ENCODE measurements at regions of chr6 and their contacts with region 1.

Region 1: GRCh38 chr6:165884813-165885765 is 222.0 kb upstream of the PDE10A start:
- DNase-seq: peak; percentile 18 to 25
- ATAC-seq: peak; percentile 39 to 41
- H3K4me3 ChIP-seq: no peak overlapping the region
- H3K27ac ChIP-seq: no peak overlapping the region
- H3K4me1 ChIP-seq: no peaks in the 10 kb centered on the region
- H3K27me3 ChIP-seq: no peaks in the 10 kb centered on the region
- CTCF ChIP-seq: peak; percentile 22 to 76 (median 64)
- POLR2A ChIP-seq: no peak

Region 2: GRCh38 chr6:165448210-165448609 is 436.9 kb before region 1 on chr6:
- in situ Hi-C with region 1: no loop called
- intact Hi-C with region 1: no loop called
- DNase-seq: no peak
- ATAC-seq: no peak
- H3K4me3 ChIP-seq: no peak overlapping the region
- H3K27ac ChIP-seq: no peak overlapping the region
- H3K4me1 ChIP-seq: no peaks in the 10 kb centered on the region
- H3K27me3 ChIP-seq: no peaks in the 10 kb centered on the region
- CTCF ChIP-seq: no peak
- POLR2A ChIP-seq: no peak

Region 3: GRCh38 chr6:165913676-165914571 is 28.8 kb after region 1 on chr6:
- in situ Hi-C with region 1: no loop called
- intact Hi-C with region 1: no loop called
- DNase-seq: no peak
- ATAC-seq: no peak
- H3K4me3 ChIP-seq: no peak overlapping the region
- H3K27ac ChIP-seq: no peak overlapping the region
- H3K4me1 ChIP-seq: no peaks in the 10 kb centered on the region
- H3K27me3 ChIP-seq: no peaks in the 10 kb centered on the region
- CTCF ChIP-seq: no peak
- POLR2A ChIP-seq: no peak

Region 4: DNA sequence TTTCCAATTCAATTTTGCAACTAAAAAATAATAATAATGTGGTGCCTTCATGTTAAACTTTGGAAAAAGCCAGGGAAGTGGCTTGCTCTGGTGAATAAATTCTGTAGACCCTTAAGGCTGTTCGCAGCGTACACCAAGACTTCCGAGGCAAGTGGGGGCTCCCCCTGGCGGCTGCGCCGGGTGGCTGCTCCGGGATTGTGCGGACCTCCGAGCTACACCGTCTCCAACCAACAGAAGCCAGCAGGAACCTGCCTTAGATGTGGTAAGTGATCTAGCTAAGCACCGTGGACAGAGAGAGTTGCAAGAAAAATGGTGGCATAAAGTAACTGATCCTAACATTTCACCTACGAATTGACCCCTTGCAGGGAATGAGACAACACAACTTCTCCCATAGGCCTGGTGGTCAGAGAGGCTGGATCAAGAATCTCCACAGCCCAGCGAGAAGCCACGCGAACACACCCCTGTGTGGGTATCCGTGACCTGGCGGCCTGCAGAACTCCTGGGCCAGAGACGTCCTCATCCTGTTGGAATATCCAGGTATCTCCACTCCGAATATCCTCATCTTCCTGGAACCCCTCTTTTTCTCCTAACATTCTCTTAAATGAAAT is 212.9 kb after region 1 on chr6:
- in situ Hi-C with region 1: loop called (anchors 5 to 10 kb)
- intact Hi-C with region 1: loop called (anchors 5 kb)
- DNase-seq: peak; percentile 14 to 27
- ATAC-seq: peak; percentile 52 to 55
- H3K4me3 ChIP-seq: peak overlapping the region in 3 of 4 donors; percentile 19 to 37 (median 25)
- H3K27ac ChIP-seq: no peak overlapping the region
- H3K4me1 ChIP-seq: no peaks in the 10 kb centered on the region
- H3K27me3 ChIP-seq: peaks cover 0 to 4% (median 3%) of the 10 kb centered on the region in 3 donors
- CTCF ChIP-seq: peak; percentile 27 to 67 (median 53)
- POLR2A ChIP-seq: no peak

Region 5: DNA sequence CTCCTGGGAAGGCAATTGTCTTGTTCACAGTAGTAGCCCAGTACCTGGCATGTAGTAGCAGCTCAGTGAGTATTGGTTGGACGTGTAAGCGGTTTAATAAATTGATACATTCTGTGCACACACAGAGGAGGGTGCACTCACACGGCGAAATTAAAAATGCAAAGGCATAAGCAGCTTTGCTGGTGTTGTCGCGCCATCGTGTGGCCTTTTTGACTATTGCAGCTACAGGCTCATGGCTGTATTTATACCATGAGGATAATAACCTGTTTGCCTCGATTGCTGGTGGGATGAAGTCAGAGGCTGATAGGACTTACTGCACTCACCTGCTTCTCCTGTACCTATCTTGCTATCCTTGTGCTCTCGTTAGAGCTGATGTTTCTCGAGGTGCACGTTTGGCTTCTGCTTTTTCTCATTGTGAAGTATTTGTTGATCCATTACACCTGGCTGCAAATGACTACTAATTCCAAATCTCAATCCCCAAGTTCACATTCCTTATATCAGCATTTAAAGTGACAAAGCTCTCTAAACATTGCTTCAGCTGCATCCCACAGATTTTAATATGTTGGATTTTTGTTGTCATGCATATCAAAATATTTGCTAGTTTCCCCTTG is 221.1 kb after region 1 on chr6:
- in situ Hi-C with region 1: no loop called
- intact Hi-C with region 1: loop called (anchors 1 kb)
- DNase-seq: peak in 1 of 2 donors; percentile 20
- ATAC-seq: no peak
- H3K4me3 ChIP-seq: no peak overlapping the region
- H3K27ac ChIP-seq: no peak overlapping the region
- H3K4me1 ChIP-seq: no peaks in the 10 kb centered on the region
- H3K27me3 ChIP-seq: peaks cover 0 to 7% (median 3%) of the 10 kb centered on the region in 3 donors
- CTCF ChIP-seq: peak; percentile 30 to 66 (median 63)
- POLR2A ChIP-seq: no peak

Measured in gastrocnemius medialis (tissue), 4 donors.